Dorsolateral prefrontal cortex (tissue), 120 donors: ENCODE measurements at regions of chr21 and their contacts with region 1.

Region 1: GRCh38 chr21:41879190-41879998 is at the start of gene PRDM15:
- DNase-seq: peak; percentile 69 to 88 (median 78)
- H3K4me3 ChIP-seq: peak within 1 kb of the TSS; percentile 60 to 95 (median 83)
- H3K27ac ChIP-seq: peak within 1 kb of the TSS in 55 of 59 donors; percentile 32 to 92 (median 80)
- H3K27me3 ChIP-seq: no peaks in the 10 kb centered on the region
- CTCF ChIP-seq: peak in 1 of 56 donors; percentile 4
- total RNA-seq, gene PRDM15: 6.7 to 20.0 (median 11.0) TPM

Region 2: DNA sequence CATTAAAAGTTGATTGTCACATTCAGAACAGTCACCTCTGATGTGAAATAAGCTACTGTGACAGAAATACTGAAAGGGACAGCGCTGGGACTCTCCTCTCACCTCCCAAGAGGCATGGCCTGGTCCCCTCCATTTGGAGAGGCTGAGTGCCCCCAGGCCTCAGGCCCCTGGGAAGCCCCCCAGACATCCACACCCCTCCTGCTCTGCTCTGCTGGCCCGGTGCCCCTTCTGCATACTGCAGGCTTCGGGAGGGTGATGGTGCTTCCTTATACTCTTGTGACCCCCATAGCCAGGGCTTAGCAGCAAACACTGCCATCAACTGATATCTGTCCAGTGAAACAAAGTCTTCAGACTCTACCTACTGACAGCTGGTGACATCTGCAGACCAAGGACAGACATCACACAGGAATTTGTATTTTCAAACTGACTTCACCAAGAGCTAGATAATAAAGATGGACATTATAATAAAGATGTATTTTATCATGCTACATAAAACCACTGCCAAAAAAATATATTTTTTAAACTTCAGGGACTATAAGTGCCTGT is 37.6 kb after region 1 on chr21:
- intact Hi-C with region 1: no loop called
- DNase-seq: peak in 1 of 10 donors; percentile 4
- H3K4me3 ChIP-seq: no peak overlapping the region
- H3K27ac ChIP-seq: peak overlapping the region in 1 of 59 donors; percentile 14
- H3K27me3 ChIP-seq: no peaks in the 10 kb centered on the region
- CTCF ChIP-seq: no peak

Region 3: GRCh38 chr21:41953831-41954653 is 74.6 kb after region 1 on chr21 and contains the start of gene C2CD2:
- intact Hi-C with region 1: loop called (anchors 5 to 10 kb)
- DNase-seq: no peak
- H3K4me3 ChIP-seq: peak within 1 kb of the TSS; percentile 37 to 80 (median 70)
- H3K27ac ChIP-seq: peak within 1 kb of the TSS in 51 of 59 donors; percentile 7 to 82 (median 63)
- H3K27me3 ChIP-seq: no peaks in the 10 kb centered on the region
- CTCF ChIP-seq: no peak
- total RNA-seq, gene C2CD2: 19.9 to 80.8 (median 42.7) TPM

Region 4: DNA sequence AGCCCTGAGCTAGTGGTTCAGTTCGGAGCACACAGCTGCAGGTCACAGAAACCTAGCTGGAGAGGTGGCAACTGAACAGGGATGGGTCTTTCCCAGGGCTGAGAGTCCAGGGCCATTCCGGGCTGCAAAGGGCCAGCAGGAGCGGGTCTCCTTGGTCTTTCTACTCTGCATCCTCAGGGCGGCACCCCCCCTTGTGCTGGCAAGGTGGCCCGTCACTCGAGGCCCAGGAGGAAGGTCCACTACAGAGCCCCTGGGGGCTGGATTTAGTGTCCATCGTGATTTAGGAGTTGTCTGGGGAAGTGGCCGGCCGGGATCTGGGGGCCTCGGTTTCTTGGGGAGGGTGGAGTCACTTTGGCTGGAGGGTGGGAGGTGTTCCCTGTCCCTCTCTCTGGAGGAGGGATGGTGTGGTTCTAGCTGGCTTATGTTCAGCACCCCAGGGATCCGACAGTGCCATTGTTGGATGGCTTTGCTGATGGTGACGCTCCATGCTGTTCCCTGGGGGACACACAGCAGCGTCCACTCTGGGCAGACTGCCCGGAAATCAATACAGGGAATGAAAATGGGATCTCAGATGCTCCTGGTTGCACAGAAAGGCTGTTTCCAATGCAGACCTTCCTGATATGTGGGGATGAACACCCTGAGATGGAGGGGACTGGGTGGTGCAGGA is 256.1 kb after region 1 on chr21:
- intact Hi-C with region 1: no loop called
- DNase-seq: no peak
- H3K4me3 ChIP-seq: no peak overlapping the region
- H3K27ac ChIP-seq: no peak overlapping the region
- H3K27me3 ChIP-seq: no peaks in the 10 kb centered on the region
- CTCF ChIP-seq: no peak